ENCODE measurements at regions of chr11 and their contacts with region 1.

Region 1: GRCh38 chr11:57741132-57742086 is at the start of gene SELENOH:
- DNase-seq: peak; percentile 99
- ATAC-seq: peak; percentile 95
- H3K4me3 Mint-ChIP-seq: peak within 1 kb of the TSS; percentile 97
- H3K27ac Mint-ChIP-seq: peak within 1 kb of the TSS; percentile 97
- H3K4me1 Mint-ChIP-seq: peaks cover 36% of the 10 kb centered on the region
- H3K27me3 Mint-ChIP-seq: no peaks in the 10 kb centered on the region
- CTCF ChIP-seq: no peak
- total RNA-seq, gene SELENOH: 257 to 265 TPM

Region 2: GRCh38 chr11:57180081-57180561 is 561.3 kb before region 1 on chr11:
- CTCF ChIA-PET with region 1: no interaction called
- POLR2A ChIA-PET with region 1: no interaction called
- intact Hi-C with region 1: no loop called
- DNase-seq: no peak
- ATAC-seq: no peak
- H3K4me3 Mint-ChIP-seq: no peak overlapping the region
- H3K27ac Mint-ChIP-seq: no peak overlapping the region
- H3K4me1 Mint-ChIP-seq: no peaks in the 10 kb centered on the region
- H3K27me3 Mint-ChIP-seq: peaks cover 36% of the 10 kb centered on the region
- CTCF ChIP-seq: no peak

Region 3: GRCh38 chr11:57638005-57638781 is 103.2 kb before region 1 on chr11:
- CTCF ChIA-PET with region 1: no interaction called
- POLR2A ChIA-PET with region 1: no interaction called
- intact Hi-C with region 1: no loop called
- DNase-seq: peak; percentile 22
- ATAC-seq: peak; percentile 43
- H3K4me3 Mint-ChIP-seq: peak overlapping the region; percentile 78
- H3K27ac Mint-ChIP-seq: peak overlapping the region; percentile 70
- H3K4me1 Mint-ChIP-seq: peaks cover 17% of the 10 kb centered on the region
- H3K27me3 Mint-ChIP-seq: peaks cover 33% of the 10 kb centered on the region
- CTCF ChIP-seq: no peak

Region 4: GRCh38 chr11:57667736-57668435 is 73.5 kb before region 1 on chr11 and contains the start of gene ZDHHC5:
- CTCF ChIA-PET with region 1: no interaction called
- POLR2A ChIA-PET with region 1: interaction called, 6 read pairs
- intact Hi-C with region 1: loop called (anchors 1 kb)
- DNase-seq: peak; percentile 99
- ATAC-seq: peak; percentile 86
- H3K4me3 Mint-ChIP-seq: peak within 1 kb of the TSS; percentile 95
- H3K27ac Mint-ChIP-seq: peak within 1 kb of the TSS; percentile 99
- H3K4me1 Mint-ChIP-seq: peaks cover 36% of the 10 kb centered on the region
- H3K27me3 Mint-ChIP-seq: no peaks in the 10 kb centered on the region
- CTCF ChIP-seq: peak; percentile 26
- total RNA-seq, gene ZDHHC5: 53.7 to 54.8 TPM

Region 5: DNA sequence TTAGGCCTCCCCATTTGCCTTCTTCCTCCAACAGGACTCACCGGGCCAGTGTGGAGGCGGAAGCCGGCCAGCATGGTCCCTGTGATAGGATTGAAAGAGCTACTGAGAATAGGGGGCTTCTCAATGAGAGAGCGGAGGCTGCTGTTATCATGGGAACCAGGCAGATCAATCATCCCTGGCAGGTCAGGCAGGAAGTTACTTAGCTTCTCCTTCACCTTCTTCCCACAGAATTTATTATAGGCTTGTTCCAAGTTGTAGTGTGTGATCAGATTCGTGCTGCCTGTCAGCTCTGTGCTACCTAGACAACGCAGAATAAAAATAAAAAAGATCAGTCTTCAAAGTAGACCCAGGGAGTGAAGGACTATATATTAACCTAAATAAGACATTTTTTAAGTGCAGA is 36.5 kb before region 1 on chr11:
- CTCF ChIA-PET with region 1: no interaction called
- POLR2A ChIA-PET with region 1: interaction called, 13 read pairs
- intact Hi-C with region 1: no loop called
- DNase-seq: no peak
- ATAC-seq: no peak
- H3K4me3 Mint-ChIP-seq: no peak overlapping the region
- H3K27ac Mint-ChIP-seq: peak overlapping the region; percentile 49
- H3K4me1 Mint-ChIP-seq: peaks cover 10% of the 10 kb centered on the region
- H3K27me3 Mint-ChIP-seq: no peaks in the 10 kb centered on the region
- CTCF ChIP-seq: no peak

Region 6: DNA sequence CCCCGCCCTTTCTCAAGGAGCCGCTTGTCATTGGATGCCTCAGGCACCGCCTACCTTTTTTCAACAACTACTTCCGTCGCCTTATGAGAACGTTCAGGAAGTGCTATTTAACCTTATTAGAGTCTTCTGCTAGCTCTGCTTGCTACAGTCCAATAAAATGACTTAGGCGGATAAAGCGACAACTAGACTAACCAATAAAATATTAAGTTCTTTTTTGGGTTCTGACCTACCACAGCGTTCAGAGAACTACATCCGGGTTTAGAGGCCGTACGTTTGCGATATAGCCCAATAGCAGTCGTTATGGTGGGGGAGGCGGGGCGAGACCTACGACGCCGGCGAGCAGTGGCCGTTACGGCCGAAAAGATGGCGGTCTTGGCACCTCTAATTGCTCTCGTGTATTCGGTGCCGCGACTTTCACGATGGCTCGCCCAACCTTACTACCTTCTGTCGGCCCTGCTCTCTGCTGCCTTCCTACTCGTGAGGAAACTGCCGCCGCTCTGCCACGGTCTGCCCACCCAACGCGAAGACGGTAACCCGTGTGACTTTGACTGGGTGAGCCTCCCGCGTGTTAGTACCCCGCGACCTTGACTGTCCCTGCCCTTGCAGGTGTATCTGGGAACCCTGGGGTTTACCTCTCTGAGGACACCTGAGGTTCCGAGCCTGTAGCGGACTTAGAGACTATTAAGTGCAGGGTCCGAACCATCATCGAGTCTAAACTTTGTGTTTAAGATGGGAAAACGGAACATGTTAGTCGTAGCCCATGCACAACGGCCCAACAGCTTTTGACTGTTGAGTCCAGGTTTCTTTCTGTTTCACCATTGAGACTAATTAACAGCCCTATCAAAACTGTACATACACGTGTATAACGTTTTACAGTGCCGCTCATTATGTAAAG is 28.9 kb before region 1 on chr11 and contains the start of gene TMX2:
- CTCF ChIA-PET with region 1: interaction called, 7 read pairs
- POLR2A ChIA-PET with region 1: interaction called, 13 read pairs
- intact Hi-C with region 1: loop called (anchors 1 kb)
- DNase-seq: peak; percentile 97
- ATAC-seq: peak; percentile 91
- H3K4me3 Mint-ChIP-seq: peak within 1 kb of the TSS; percentile 85
- H3K27ac Mint-ChIP-seq: peak within 1 kb of the TSS; percentile 90
- H3K4me1 Mint-ChIP-seq: peaks cover 46% of the 10 kb centered on the region
- H3K27me3 Mint-ChIP-seq: no peaks in the 10 kb centered on the region
- CTCF ChIP-seq: no peak
- total RNA-seq, gene TMX2: 53.1 to 58.6 TPM

Region 7: DNA sequence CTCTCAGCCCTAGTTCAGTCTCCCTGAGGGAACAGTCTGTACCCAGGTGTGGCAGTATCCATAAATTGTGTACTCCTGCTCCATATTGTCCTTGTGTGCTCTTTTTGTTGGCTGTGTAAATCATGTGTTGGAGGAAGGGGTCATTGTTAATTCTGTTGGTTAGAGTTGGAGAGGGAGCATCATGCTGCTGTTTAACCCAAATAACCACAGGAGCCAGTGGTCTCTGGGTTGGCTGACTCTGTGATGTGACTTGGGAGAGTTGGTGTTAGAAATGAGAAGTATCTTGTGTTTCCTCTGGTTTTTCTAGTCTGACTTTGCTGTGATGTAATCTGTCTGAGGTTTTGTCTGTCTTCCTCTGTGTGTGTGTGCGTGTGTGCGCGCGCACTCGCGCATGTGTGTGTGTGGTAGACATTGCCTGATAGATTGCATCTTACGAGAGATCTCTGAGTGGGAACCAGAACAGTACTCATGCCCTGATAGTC is 50.7 kb after region 1 on chr11:
- CTCF ChIA-PET with region 1: interaction called, 4 read pairs
- POLR2A ChIA-PET with region 1: interaction called, 4 read pairs
- intact Hi-C with region 1: loop called (anchors 2 kb)
- DNase-seq: peak; percentile 92
- ATAC-seq: peak; percentile 95
- H3K4me3 Mint-ChIP-seq: peak overlapping the region; percentile 54
- H3K27ac Mint-ChIP-seq: peak overlapping the region; percentile 95
- H3K4me1 Mint-ChIP-seq: peaks cover 36% of the 10 kb centered on the region
- H3K27me3 Mint-ChIP-seq: no peaks in the 10 kb centered on the region
- CTCF ChIP-seq: no peak

Region 8: GRCh38 chr11:58354727-58355126 is 613.3 kb after region 1 on chr11:
- CTCF ChIA-PET with region 1: no interaction called
- POLR2A ChIA-PET with region 1: no interaction called
- intact Hi-C with region 1: no loop called
- DNase-seq: no peak
- ATAC-seq: no peak
- H3K4me3 Mint-ChIP-seq: no peak overlapping the region
- H3K27ac Mint-ChIP-seq: no peak overlapping the region
- H3K4me1 Mint-ChIP-seq: no peaks in the 10 kb centered on the region
- H3K27me3 Mint-ChIP-seq: peaks cover 6% of the 10 kb centered on the region
- CTCF ChIP-seq: no peak